ENCODE measurements at regions of chr6 and their contacts with region 1.

Region 1: DNA sequence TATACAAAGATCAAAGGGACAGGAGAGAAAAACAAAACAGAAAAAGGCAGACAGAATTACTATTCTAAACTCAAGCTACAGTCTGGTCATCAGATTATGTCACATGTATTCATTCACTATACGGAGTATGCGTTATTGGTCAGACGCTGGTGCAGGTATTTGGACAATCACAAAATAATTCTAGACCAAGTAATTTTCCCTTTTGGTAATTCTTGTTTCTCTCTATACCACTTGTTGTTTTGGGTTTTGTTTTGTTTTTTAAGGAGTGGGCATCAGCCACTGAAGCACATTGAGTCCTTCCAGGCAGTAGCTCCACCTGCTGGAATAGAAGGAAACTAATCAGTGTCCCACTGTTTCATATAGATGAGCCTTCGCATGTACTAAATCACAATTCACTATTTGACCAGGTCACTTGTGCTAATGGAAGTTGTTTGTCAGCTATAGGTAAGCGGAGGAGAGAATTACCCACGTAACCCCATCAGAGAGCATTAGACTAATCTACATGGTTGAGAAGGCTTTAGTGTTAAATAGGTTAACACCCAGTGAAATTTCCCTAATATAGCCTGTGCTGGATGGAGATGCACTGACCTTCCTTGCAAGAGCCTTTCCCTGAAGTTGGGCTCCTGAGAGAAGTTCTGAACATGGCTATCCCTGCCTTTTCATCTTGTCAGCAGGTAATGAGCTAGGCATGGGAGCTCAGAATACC is 77.9 kb downstream of the TNFAIP3 start:
- DNase-seq: peak; percentile 36
- ATAC-seq: peak; percentile 37
- H3K4me3 Mint-ChIP-seq: no peak overlapping the region
- H3K27ac Mint-ChIP-seq: peak overlapping the region; percentile 23
- H3K4me1 Mint-ChIP-seq: peaks cover 52% of the 10 kb centered on the region
- H3K27me3 Mint-ChIP-seq: no peaks in the 10 kb centered on the region

Region 2: GRCh38 chr6:137799950-137800568 is 144.9 kb before region 1 on chr6:
- CTCF ChIA-PET with region 1: interaction called, 5 read pairs
- POLR2A ChIA-PET with region 1: no interaction called
- intact Hi-C with region 1: loop called (anchors 2 kb)
- DNase-seq: peak; percentile 76
- ATAC-seq: peak; percentile 80
- H3K4me3 Mint-ChIP-seq: no peak overlapping the region
- H3K27ac Mint-ChIP-seq: peak overlapping the region; percentile 84
- H3K4me1 Mint-ChIP-seq: peaks cover 65% of the 10 kb centered on the region
- H3K27me3 Mint-ChIP-seq: no peaks in the 10 kb centered on the region

Region 3: DNA sequence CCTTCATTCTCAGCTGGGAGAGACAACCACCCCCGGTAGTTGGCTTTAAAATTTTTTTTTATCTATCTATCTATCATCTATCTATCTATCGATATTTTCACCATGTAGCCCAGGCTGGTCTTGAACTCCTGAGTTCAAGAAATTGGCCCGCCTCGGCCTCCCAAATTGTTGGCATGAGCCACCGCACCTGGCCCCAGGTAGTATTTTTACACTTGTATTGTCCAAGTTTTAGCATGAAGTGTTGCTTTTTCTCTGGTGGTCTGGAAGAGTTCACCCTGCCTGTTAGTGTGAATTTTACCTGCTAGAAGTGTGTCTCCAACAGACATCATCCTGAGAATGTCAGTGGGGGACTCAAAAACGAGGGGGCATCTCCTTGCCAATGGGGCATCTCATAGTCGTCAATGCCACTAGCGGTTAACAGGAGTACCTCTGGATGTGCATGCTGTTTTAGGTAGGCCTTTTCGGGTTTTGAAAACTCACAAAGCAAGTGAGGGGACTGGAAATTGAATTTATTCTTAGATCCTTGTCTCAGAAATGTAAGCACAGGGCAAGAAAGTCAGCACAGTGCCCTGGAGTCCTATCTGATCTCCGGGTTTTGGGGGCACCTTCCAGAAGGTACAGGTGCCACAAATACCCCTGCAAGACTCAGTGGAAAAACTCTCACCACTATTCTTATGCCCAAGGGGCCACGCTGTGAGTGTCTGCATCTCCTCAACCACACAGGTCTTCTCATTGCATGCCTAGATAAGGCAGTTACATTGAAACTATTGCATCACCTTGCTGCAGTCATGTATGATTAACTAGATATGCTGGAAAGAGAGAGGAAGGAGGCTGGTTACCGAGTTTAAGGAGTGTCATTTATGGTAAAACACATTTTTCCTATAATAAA is 40.8 kb before region 1 on chr6:
- CTCF ChIA-PET with region 1: interaction called, 5 read pairs
- POLR2A ChIA-PET with region 1: no interaction called
- intact Hi-C with region 1: loop called (anchors 2 kb)
- DNase-seq: peak; percentile 75
- ATAC-seq: peak; percentile 85
- H3K4me3 Mint-ChIP-seq: peak overlapping the region; percentile 69
- H3K27ac Mint-ChIP-seq: peak overlapping the region; percentile 98
- H3K4me1 Mint-ChIP-seq: peaks cover 62% of the 10 kb centered on the region
- H3K27me3 Mint-ChIP-seq: no peaks in the 10 kb centered on the region

Region 4: GRCh38 chr6:137933696-137934095 is 11.2 kb before region 1 on chr6:
- CTCF ChIA-PET with region 1: interaction called, 13 read pairs
- POLR2A ChIA-PET with region 1: no interaction called
- intact Hi-C with region 1: loop called in 1 of 2 experiments (anchors 1 kb)
- DNase-seq: no peak
- ATAC-seq: peak; percentile 33
- H3K4me3 Mint-ChIP-seq: no peak overlapping the region
- H3K27ac Mint-ChIP-seq: peak overlapping the region; percentile 53
- H3K4me1 Mint-ChIP-seq: peaks cover 35% of the 10 kb centered on the region
- H3K27me3 Mint-ChIP-seq: no peaks in the 10 kb centered on the region

Region 5: DNA sequence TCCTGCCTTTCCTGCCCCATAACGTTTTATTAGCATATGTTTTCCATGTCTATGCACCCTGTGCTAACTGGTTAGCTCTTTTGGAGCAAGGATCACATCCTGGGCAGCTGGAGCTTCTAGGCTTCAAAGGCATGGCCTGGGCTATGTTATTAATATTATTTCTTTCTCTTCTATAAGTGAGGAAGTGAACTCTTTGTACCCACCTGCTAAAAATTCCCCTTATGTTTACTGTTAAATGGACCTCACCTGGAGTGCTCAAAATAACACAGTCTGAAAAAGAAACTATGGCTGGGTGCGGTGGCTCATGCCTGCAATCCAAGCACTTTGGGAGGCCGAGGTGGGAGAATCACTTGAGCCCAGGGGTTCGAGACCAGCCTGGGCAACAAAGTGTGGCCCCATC is 19.9 kb after region 1 on chr6:
- CTCF ChIA-PET with region 1: interaction called, 13 read pairs
- POLR2A ChIA-PET with region 1: no interaction called
- intact Hi-C with region 1: no loop called
- DNase-seq: no peak
- ATAC-seq: no peak
- H3K4me3 Mint-ChIP-seq: no peak overlapping the region
- H3K27ac Mint-ChIP-seq: no peak overlapping the region
- H3K4me1 Mint-ChIP-seq: peaks cover 24% of the 10 kb centered on the region
- H3K27me3 Mint-ChIP-seq: no peaks in the 10 kb centered on the region

Region 6: GRCh38 chr6:137989664-137990063 is 44.7 kb after region 1 on chr6:
- CTCF ChIA-PET with region 1: no interaction called
- POLR2A ChIA-PET with region 1: no interaction called
- intact Hi-C with region 1: no loop called
- DNase-seq: no peak
- ATAC-seq: no peak
- H3K4me3 Mint-ChIP-seq: no peak overlapping the region
- H3K27ac Mint-ChIP-seq: no peak overlapping the region
- H3K4me1 Mint-ChIP-seq: no peaks in the 10 kb centered on the region
- H3K27me3 Mint-ChIP-seq: peaks cover 4% of the 10 kb centered on the region

Region 7: DNA sequence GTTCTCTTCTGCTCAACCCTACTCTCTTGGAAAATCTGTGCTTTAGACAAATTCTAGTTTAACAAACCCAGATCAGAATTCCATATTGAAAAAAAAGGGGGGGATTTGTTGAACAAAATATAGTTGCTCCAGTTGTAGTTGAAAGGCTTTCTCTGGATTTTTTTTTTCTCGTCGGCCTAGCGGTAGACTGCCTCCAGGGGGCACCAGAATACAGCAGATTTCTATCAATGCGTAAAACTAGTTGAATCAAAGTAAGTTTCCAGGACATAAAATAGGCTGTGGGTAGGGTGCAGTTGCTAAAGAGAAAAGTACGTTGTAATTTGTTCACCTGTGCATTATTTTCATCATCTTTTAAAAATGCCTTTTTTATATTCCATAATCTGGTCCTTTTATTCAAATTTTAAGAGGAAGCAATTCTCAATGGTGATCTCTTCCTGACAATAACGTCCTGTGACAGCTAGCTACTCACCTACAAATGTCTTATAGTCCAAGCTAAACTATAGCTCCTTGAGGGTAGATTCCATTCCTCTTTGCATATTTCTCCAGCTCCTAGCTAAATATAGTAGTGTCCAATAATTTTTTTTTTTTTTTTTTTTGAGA is 56.9 kb after region 1 on chr6:
- CTCF ChIA-PET with region 1: interaction called, 7 read pairs
- POLR2A ChIA-PET with region 1: no interaction called
- intact Hi-C with region 1: loop called in 1 of 2 experiments (anchors 2 kb)
- DNase-seq: peak; percentile 76
- ATAC-seq: peak; percentile 31
- H3K4me3 Mint-ChIP-seq: no peak overlapping the region
- H3K27ac Mint-ChIP-seq: no peak overlapping the region
- H3K4me1 Mint-ChIP-seq: peaks cover 20% of the 10 kb centered on the region
- H3K27me3 Mint-ChIP-seq: peaks cover 3% of the 10 kb centered on the region

Region 8: DNA sequence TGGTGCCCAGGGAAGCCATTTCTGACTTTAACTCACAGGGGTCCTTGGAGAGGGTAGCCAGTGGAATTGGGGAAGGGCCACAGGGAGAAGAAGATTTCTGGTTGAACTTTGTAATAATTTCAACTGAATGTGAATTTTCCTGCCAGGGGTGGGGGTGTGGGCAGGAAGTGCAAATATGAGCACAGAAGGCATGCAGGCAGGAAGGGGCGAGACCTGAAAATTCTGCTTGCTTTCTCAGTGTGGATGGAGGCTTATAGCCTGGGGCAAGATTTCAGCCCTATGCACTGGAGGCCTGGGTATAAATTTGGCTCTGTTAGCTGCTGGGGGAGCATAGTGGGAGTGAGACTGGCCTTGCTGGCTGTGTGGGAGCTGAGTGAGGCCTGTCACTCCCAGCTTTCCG is 107.8 kb after region 1 on chr6:
- CTCF ChIA-PET with region 1: no interaction called
- POLR2A ChIA-PET with region 1: no interaction called
- intact Hi-C with region 1: no loop called
- DNase-seq: no peak
- ATAC-seq: no peak
- H3K4me3 Mint-ChIP-seq: no peak overlapping the region
- H3K27ac Mint-ChIP-seq: no peak overlapping the region
- H3K4me1 Mint-ChIP-seq: no peaks in the 10 kb centered on the region
- H3K27me3 Mint-ChIP-seq: peaks cover 34% of the 10 kb centered on the region